B cell (primary cell): ENCODE measurements at regions of chr19 and their contacts with region 1.

Region 1: GRCh38 chr19:35931161-35931873 is 4.9 kb upstream of the LRFN3 start:
- DNase-seq: peak; percentile 100
- ATAC-seq: peak; percentile 92
- H3K4me3 ChIP-seq: peak overlapping the region in 4 of 5 experiments; percentile 32 to 63 (median 51)
- H3K4me3 Mint-ChIP-seq: peak overlapping the region; percentile 77
- H3K27ac ChIP-seq: peak overlapping the region; percentile 81 to 86
- H3K27ac Mint-ChIP-seq: peak overlapping the region; percentile 86
- H3K4me1 ChIP-seq: peaks cover 40 to 55% of the 10 kb centered on the region in 2 donors
- H3K4me1 Mint-ChIP-seq: peaks cover 46% of the 10 kb centered on the region
- H3K27me3 ChIP-seq: peaks cover 0 to 9% (median 3%) of the 10 kb centered on the region in 4 experiments
- H3K27me3 Mint-ChIP-seq: peaks cover 5% of the 10 kb centered on the region
- CTCF ChIP-seq: peak; percentile 84

Region 2: DNA sequence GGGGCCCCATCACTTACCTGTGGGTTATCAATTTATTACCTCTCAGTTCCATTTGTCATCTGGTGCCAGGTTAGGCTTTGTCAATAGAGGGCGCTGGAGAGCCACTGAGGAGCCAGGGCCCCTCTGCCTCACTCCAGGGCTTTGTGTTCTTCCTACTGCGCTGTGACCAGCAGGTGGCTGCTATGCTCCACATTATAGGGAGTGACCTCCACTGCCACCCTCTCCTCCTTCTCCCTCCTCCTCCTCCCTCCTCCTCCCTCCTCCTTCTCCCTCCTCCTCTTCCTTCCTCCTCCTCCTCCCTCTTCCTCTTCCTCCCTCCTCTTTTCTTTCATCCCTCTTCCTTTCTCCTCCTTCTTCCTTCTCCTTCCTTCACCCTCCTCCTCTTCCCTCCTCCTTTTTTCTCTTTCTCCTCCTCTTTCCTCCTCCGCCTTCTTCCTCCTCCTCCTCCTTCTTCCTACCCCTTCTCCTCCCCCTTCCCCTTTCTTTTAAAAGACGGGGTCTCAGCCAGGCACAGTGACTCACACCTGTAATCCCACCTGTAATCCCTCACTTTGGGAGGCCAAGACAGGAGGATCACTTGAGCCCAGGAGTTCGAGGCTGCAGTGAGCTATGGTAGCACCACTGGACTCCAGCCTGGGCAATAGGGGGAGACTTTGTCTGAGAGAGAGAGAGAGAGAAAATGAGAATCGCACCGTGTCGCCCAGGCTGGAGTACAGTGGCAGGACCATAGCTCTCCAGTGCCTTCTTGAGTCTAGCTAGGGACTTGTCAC is 237.3 kb before region 1 on chr19:
- CTCF ChIA-PET with region 1: interaction called, 5 read pairs
- POLR2A ChIA-PET with region 1: no interaction called
- intact Hi-C with region 1: loop called (anchors 1 kb)
- DNase-seq: peak; percentile 92
- ATAC-seq: peak; percentile 100
- H3K4me3 ChIP-seq: no peak overlapping the region
- H3K4me3 Mint-ChIP-seq: no peak overlapping the region
- H3K27ac ChIP-seq: no peak overlapping the region
- H3K27ac Mint-ChIP-seq: no peak overlapping the region
- H3K4me1 ChIP-seq: no peaks in the 10 kb centered on the region
- H3K4me1 Mint-ChIP-seq: no peaks in the 10 kb centered on the region
- H3K27me3 ChIP-seq: no peaks in the 10 kb centered on the region
- H3K27me3 Mint-ChIP-seq: no peaks in the 10 kb centered on the region
- CTCF ChIP-seq: peak; percentile 99

Region 3: GRCh38 chr19:35748106-35749020 is 183.0 kb before region 1 on chr19 and contains the start of gene LIN37:
- CTCF ChIA-PET with region 1: interaction called, 4 read pairs
- POLR2A ChIA-PET with region 1: no interaction called
- intact Hi-C with region 1: loop called (anchors 1 kb)
- DNase-seq: peak; percentile 99
- ATAC-seq: peak; percentile 71
- H3K4me3 ChIP-seq: peak within 1 kb of the TSS; percentile 65 to 99 (median 74)
- H3K4me3 Mint-ChIP-seq: peak within 1 kb of the TSS; percentile 99
- H3K27ac ChIP-seq: peak within 1 kb of the TSS; percentile 63 to 92
- H3K27ac Mint-ChIP-seq: peak within 1 kb of the TSS; percentile 97
- H3K4me1 ChIP-seq: peaks cover 30 to 38% of the 10 kb centered on the region in 2 donors
- H3K4me1 Mint-ChIP-seq: peaks cover 49% of the 10 kb centered on the region
- H3K27me3 ChIP-seq: no peaks in the 10 kb centered on the region
- H3K27me3 Mint-ChIP-seq: no peaks in the 10 kb centered on the region
- CTCF ChIP-seq: no peak
- total RNA-seq, gene LIN37: 22.3 and 22.8 TPM in 2 replicates

Region 4: GRCh38 chr19:35882114-35882832 is 49.0 kb before region 1 on chr19:
- CTCF ChIA-PET with region 1: interaction called, 168 read pairs
- POLR2A ChIA-PET with region 1: interaction called, 12 read pairs
- intact Hi-C with region 1: loop called (anchors 1 kb)
- DNase-seq: peak; percentile 84
- ATAC-seq: peak; percentile 63
- H3K4me3 ChIP-seq: no peak overlapping the region
- H3K4me3 Mint-ChIP-seq: no peak overlapping the region
- H3K27ac ChIP-seq: no peak overlapping the region
- H3K27ac Mint-ChIP-seq: peak overlapping the region; percentile 59
- H3K4me1 ChIP-seq: peaks cover 4 to 7% of the 10 kb centered on the region in 2 donors
- H3K4me1 Mint-ChIP-seq: peaks cover 17% of the 10 kb centered on the region
- H3K27me3 ChIP-seq: peaks cover 0 to 28% (median 12%) of the 10 kb centered on the region in 4 experiments
- H3K27me3 Mint-ChIP-seq: peaks cover 22% of the 10 kb centered on the region
- CTCF ChIP-seq: peak; percentile 80

Region 5: DNA sequence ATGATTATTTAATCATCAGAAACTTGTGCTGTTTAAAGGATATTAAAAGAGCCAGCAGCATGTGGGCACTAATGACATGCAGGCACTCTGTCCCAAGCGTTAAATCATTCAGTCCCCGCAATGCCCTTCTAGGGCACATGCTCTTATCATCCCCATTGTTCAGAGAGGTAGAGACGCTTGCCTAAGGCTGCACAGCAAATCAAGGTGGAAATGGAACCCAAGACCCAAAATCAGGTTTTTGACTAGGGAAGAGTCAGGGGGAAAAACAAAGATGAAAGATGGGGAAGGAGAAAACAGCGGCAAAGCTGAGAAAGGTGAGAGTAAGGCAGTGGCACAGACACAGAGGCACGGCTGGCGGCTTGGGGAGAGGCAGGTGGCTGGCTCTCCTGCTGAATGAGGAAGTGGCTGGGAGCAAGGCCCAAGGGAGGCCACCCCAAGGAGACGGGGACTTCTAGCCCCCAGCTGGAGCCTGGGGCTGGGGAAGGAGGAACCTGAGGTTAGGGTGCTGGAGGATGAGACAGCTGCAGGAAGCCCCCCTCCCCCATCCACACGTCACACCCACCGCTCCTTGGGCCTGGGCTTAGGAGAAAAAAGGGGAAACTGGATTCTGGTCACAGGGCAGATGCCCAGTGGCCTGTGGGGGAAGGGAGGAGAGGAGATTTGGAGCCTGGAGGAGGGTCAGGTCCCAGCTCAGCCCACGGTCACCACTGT is 22.2 kb before region 1 on chr19:
- CTCF ChIA-PET with region 1: interaction called, 6 read pairs
- POLR2A ChIA-PET with region 1: interaction called, 10 read pairs
- intact Hi-C with region 1: loop called (anchors 1 kb)
- DNase-seq: peak; percentile 94
- ATAC-seq: peak; percentile 85
- H3K4me3 ChIP-seq: peak overlapping the region in 3 of 5 experiments; percentile 4 to 33 (median 7)
- H3K4me3 Mint-ChIP-seq: peak overlapping the region; percentile 68
- H3K27ac ChIP-seq: peak overlapping the region; percentile 87
- H3K27ac Mint-ChIP-seq: peak overlapping the region; percentile 87
- H3K4me1 ChIP-seq: peaks cover 42 to 64% of the 10 kb centered on the region in 2 donors
- H3K4me1 Mint-ChIP-seq: peaks cover 61% of the 10 kb centered on the region
- H3K27me3 ChIP-seq: no peaks in the 10 kb centered on the region
- H3K27me3 Mint-ChIP-seq: no peaks in the 10 kb centered on the region
- CTCF ChIP-seq: no peak

Region 6: GRCh38 chr19:36114763-36115452 is 183.6 kb after region 1 on chr19 and contains the start of gene POLR2I:
- CTCF ChIA-PET with region 1: no interaction called
- POLR2A ChIA-PET with region 1: no interaction called
- intact Hi-C with region 1: loop called (anchors 1 kb)
- DNase-seq: peak; percentile 100
- ATAC-seq: peak; percentile 87
- H3K4me3 ChIP-seq: peak within 1 kb of the TSS; percentile 76 to 91 (median 79)
- H3K4me3 Mint-ChIP-seq: peak within 1 kb of the TSS; percentile 95
- H3K27ac ChIP-seq: peak within 1 kb of the TSS; percentile 84 to 90
- H3K27ac Mint-ChIP-seq: peak within 1 kb of the TSS; percentile 99
- H3K4me1 ChIP-seq: peaks cover 16 to 23% of the 10 kb centered on the region in 2 donors
- H3K4me1 Mint-ChIP-seq: peaks cover 40% of the 10 kb centered on the region
- H3K27me3 ChIP-seq: no peaks in the 10 kb centered on the region
- H3K27me3 Mint-ChIP-seq: no peaks in the 10 kb centered on the region
- CTCF ChIP-seq: no peak
- total RNA-seq, gene POLR2I: 28.2 and 33.4 TPM in 2 replicates

Region 7: DNA sequence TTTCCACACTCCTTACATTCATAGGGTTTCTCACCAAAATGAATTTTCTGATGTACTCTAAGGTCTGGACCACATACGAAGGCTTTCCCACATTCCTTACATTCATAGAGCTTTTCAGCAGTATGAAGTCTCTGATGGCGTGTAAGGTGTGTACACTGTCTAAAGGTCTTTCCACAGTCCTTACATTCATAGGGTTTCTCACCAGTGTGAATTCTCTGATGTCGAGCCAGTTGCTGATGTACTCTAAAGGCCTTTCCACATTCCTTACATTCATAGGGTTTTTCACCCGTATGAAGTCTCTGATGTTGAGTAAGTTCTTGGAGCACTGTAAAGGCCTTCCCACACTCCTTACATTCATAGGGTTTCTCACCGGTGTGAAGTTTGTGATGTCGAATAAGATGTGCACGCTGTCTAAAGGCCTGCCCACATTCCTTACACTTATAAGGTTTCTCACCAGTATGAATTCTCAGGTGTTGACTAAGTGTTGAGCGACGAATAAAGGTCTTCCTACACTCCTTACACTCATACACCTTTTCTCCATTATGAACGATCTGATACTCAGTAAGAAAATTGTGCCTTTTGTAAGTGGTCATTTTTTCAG is 409.6 kb after region 1 on chr19:
- CTCF ChIA-PET with region 1: no interaction called
- POLR2A ChIA-PET with region 1: no interaction called
- intact Hi-C with region 1: no loop called
- DNase-seq: no peak
- ATAC-seq: no peak
- H3K4me3 ChIP-seq: no peak overlapping the region
- H3K4me3 Mint-ChIP-seq: no peak overlapping the region
- H3K27ac ChIP-seq: no peak overlapping the region
- H3K27ac Mint-ChIP-seq: no peak overlapping the region
- H3K4me1 ChIP-seq: no peaks in the 10 kb centered on the region
- H3K4me1 Mint-ChIP-seq: no peaks in the 10 kb centered on the region
- H3K27me3 ChIP-seq: no peaks in the 10 kb centered on the region
- H3K27me3 Mint-ChIP-seq: no peaks in the 10 kb centered on the region
- CTCF ChIP-seq: no peak